Aorta (tissue), 5 donors: ENCODE measurements at regions of chr10 and their contacts with region 1.

Region 1: GRCh38 chr10:30392564-30392990 is 41.4 kb upstream of the MAP3K8 start:
- DNase-seq: peak; percentile 79 to 92
- ATAC-seq: peak; percentile 95
- H3K4me3 ChIP-seq: no peak overlapping the region
- H3K27ac ChIP-seq: no peak overlapping the region
- H3K4me1 ChIP-seq: no peaks in the 10 kb centered on the region
- H3K27me3 ChIP-seq: no peaks in the 10 kb centered on the region

Region 2: DNA sequence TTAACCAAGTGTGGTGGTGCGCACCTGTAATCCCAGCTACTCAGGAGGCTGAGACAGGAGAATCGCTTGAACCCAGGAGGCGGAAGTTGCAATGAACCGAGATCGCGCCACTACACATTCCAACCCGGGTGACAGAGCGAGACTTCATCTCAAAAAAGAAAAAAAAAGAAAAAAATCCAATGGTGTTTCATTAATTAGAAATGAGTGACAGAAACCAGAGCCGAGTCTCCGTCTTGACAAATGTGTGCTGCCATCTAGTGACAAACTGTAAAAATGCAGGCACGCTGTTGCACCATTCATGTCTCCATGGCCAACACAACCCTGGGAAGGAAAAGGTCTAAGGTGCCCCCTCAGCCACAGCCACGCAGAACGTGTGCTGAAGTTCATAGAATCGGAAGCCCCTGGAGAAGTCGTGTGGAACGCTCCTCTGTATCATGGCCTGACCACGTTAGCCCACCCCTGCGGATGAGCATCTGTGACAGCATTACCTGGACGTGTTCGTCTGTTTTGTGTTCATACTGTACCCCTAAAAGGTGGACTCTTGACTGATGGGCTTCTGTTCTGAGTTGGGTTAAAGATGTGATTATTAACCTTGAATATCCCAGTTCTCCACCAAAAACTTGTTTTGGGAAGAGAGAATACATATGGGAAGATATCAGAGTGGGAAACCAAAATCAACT is 142.0 kb after region 1 on chr10:
- intact Hi-C with region 1: loop called (anchors 5 kb)
- DNase-seq: peak; percentile 74 to 77
- ATAC-seq: peak; percentile 83
- H3K4me3 ChIP-seq: no peak overlapping the region
- H3K27ac ChIP-seq: no peak overlapping the region
- H3K4me1 ChIP-seq: no peaks in the 10 kb centered on the region
- H3K27me3 ChIP-seq: no peaks in the 10 kb centered on the region

Region 3: DNA sequence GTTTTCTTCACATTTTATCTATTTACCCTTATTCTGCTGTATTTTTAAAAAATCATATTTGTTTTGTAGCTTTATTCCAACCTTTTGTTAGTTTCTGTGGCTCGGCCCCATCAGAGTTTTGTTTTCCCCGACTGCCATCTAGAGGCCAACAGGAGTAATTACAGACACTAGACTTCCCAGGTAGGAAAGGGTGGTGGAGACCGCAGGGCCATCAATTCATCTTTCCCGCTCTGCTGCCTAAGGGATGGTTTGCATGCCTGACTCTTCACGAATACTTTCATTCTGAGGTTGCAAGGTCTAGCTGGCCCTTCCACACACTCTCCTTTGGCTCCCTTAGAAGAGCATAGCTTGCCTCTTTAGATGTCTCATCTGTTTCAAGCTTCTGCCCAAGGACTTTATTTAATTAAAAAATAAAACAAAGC is 198.7 kb after region 1 on chr10:
- intact Hi-C with region 1: loop called (anchors 1 kb)
- DNase-seq: no peak
- ATAC-seq: peak; percentile 82
- H3K4me3 ChIP-seq: no peak overlapping the region
- H3K27ac ChIP-seq: no peak overlapping the region
- H3K4me1 ChIP-seq: no peaks in the 10 kb centered on the region
- H3K27me3 ChIP-seq: no peaks in the 10 kb centered on the region